Activated B cell treated with CpG ODN at 0.5 μM for 24 hours (primary cell): ENCODE measurements at regions of chr17 and their contacts with region 1.

Region 1: GRCh38 chr17:78774956-78775571 is 7.0 kb downstream of the CYTH1 start:
- DNase-seq: peak; percentile 57
- ATAC-seq: peak; percentile 56
- H3K4me3 Mint-ChIP-seq: peak overlapping the region; percentile 88
- H3K27ac Mint-ChIP-seq: peak overlapping the region; percentile 97
- H3K4me1 Mint-ChIP-seq: peaks cover 85% of the 10 kb centered on the region
- H3K27me3 Mint-ChIP-seq: no peaks in the 10 kb centered on the region
- CTCF ChIP-seq: no peak

Region 2: DNA sequence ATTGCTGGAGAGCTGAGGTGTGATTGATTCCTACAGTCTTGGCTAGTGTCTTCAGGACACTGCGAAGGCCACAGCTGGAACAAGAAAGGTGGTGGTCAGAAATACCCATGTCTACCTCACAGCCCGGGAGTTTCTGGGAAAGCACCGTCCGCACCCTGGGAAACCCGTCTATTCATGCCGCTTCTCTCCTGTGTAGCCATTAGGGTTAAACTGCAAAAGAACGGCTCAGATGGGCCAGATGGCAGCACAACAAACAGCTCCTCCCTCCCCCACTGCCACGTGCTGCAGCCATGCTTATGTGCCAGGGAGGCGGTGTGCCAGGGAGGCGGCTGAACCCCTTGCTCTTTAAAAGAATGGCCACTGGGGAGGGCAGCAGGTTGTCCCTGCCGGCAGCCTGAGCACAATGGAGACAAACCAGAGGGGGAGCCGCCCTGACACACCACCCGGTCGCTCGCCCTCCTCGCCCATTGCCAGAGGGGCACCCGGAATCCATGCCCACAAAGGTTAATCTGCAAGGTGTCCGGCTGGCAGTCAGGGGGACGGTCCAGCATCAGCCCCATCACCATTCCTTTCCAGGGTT is 58.2 kb before region 1 on chr17:
- CTCF ChIA-PET with region 1: interaction called, 3 read pairs
- POLR2A ChIA-PET with region 1: interaction called, 20 read pairs
- intact Hi-C with region 1: no loop called
- DNase-seq: no peak
- ATAC-seq: peak; percentile 28
- H3K4me3 Mint-ChIP-seq: peak overlapping the region; percentile 65
- H3K27ac Mint-ChIP-seq: peak overlapping the region; percentile 78
- H3K4me1 Mint-ChIP-seq: peaks cover 95% of the 10 kb centered on the region
- H3K27me3 Mint-ChIP-seq: no peaks in the 10 kb centered on the region
- CTCF ChIP-seq: no peak

Region 3: GRCh38 chr17:78759203-78759968 is 15.7 kb before region 1 on chr17:
- CTCF ChIA-PET with region 1: interaction called, 3 read pairs
- POLR2A ChIA-PET with region 1: interaction called, 14 read pairs
- intact Hi-C with region 1: loop called (anchors 1 kb)
- DNase-seq: no peak
- ATAC-seq: peak; percentile 74
- H3K4me3 Mint-ChIP-seq: peak overlapping the region; percentile 70
- H3K27ac Mint-ChIP-seq: peak overlapping the region; percentile 94
- H3K4me1 Mint-ChIP-seq: peaks cover 81% of the 10 kb centered on the region
- H3K27me3 Mint-ChIP-seq: no peaks in the 10 kb centered on the region
- CTCF ChIP-seq: no peak

Region 4: GRCh38 chr17:78925234-78925633 is 150.2 kb after region 1 on chr17 and contains the start of gene TIMP2:
- CTCF ChIA-PET with region 1: no interaction called
- POLR2A ChIA-PET with region 1: interaction called, 10 read pairs
- intact Hi-C with region 1: no loop called
- DNase-seq: peak; percentile 62
- ATAC-seq: peak; percentile 81
- H3K4me3 Mint-ChIP-seq: peak within 1 kb of the TSS; percentile 86
- H3K27ac Mint-ChIP-seq: no peak within 1 kb of the TSS
- H3K4me1 Mint-ChIP-seq: peaks cover 15% of the 10 kb centered on the region
- H3K27me3 Mint-ChIP-seq: peaks cover 15% of the 10 kb centered on the region
- CTCF ChIP-seq: no peak
- total RNA-seq, gene TIMP2: 3.5 and 4.2 TPM in 2 replicates

Region 5: GRCh38 chr17:79325709-79326430 is 550.8 kb after region 1 on chr17:
- CTCF ChIA-PET with region 1: no interaction called
- POLR2A ChIA-PET with region 1: no interaction called
- intact Hi-C with region 1: no loop called
- DNase-seq: no peak
- ATAC-seq: no peak
- H3K4me3 Mint-ChIP-seq: no peak overlapping the region
- H3K27ac Mint-ChIP-seq: no peak overlapping the region
- H3K4me1 Mint-ChIP-seq: no peaks in the 10 kb centered on the region
- H3K27me3 Mint-ChIP-seq: peaks cover 48% of the 10 kb centered on the region
- CTCF ChIP-seq: no peak